Natural killer cell (primary cell): ENCODE measurements at regions of chr2 and their contacts with region 1.

Region 1: DNA sequence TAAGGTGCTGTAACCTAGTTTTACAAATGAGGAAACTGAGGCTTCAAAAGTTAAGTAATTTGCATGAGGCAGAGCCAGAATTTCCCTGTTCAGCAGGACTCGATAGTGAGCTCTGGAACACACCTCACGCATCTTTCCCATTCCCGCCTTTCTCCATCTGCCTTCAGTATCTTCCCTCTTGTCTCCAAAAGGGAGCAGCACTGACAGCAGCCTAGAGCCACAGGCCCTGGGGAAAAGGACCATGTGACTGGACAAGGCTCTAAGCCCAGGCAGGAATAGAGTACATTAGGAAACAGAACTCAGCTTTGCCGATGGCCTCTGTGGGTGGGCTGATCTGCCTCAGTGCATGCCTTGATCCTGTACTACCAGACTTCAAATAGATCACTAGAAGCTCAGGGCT is 21.5 kb downstream of the GPR155 start:
- DNase-seq: no peak
- ATAC-seq: no peak
- H3K4me3 ChIP-seq: no peak overlapping the region
- H3K4me3 Mint-ChIP-seq: no peak overlapping the region
- H3K27ac ChIP-seq: no peak overlapping the region
- H3K27ac Mint-ChIP-seq: no peak overlapping the region
- H3K4me1 ChIP-seq: no peaks in the 10 kb centered on the region
- H3K4me1 Mint-ChIP-seq: no peaks in the 10 kb centered on the region
- H3K27me3 ChIP-seq: no peaks in the 10 kb centered on the region
- H3K27me3 Mint-ChIP-seq: no peaks in the 10 kb centered on the region
- CTCF ChIP-seq: no peak

Region 2: GRCh38 chr2:174522553-174522952 is 57.2 kb after region 1 on chr2:
- intact Hi-C with region 1: loop called (anchors 1 kb)
- DNase-seq: peak in 1 of 2 donors; percentile 37
- ATAC-seq: no peak
- H3K4me3 ChIP-seq: no peak overlapping the region
- H3K4me3 Mint-ChIP-seq: no peak overlapping the region
- H3K27ac ChIP-seq: no peak overlapping the region
- H3K27ac Mint-ChIP-seq: no peak overlapping the region
- H3K4me1 ChIP-seq: no peaks in the 10 kb centered on the region
- H3K4me1 Mint-ChIP-seq: peaks cover 4 to 5% of the 10 kb centered on the region in 2 donors
- H3K27me3 ChIP-seq: no peaks in the 10 kb centered on the region
- H3K27me3 Mint-ChIP-seq: peaks cover 12 to 14% of the 10 kb centered on the region in 2 donors
- CTCF ChIP-seq: peak; percentile 59

Region 3: DNA sequence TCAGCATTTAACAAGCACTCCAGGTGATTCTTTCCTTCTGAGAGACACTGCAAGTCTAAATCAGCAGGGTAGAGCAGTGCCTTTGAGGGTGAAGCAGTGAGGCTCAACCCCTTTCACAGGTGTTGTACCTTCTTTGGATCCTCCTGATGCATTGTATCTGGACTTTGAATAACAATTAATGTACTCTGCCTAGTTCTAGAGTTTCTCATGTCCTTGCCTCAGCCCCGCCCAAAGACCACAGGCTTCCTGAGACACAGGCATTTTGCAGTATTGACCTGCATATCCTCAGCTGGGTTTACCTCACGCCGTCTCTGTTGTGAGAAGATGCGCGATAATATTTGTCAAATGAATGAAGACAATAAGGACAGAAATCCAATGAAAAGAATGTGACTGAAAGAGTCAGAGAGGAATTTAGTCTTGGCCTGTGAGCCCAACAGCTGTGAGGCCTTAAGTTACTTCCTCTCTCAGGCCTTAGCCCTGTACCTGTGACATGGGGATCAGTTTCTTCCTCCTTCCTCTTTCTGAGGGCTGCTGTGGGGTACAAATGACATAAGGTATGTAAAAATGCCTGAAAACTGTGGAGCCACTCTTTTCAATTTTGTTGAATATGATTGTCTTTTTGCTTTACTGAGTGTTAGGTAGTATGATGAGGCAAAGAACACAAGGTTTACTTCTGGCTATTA is 88.6 kb after region 1 on chr2:
- intact Hi-C with region 1: loop called (anchors 5 kb)
- DNase-seq: peak in 1 of 2 donors; percentile 58
- ATAC-seq: peak; percentile 55 to 81 (median 76)
- H3K4me3 ChIP-seq: no peak overlapping the region
- H3K4me3 Mint-ChIP-seq: peak overlapping the region; percentile 52
- H3K27ac ChIP-seq: peak overlapping the region; percentile 66
- H3K27ac Mint-ChIP-seq: peak overlapping the region; percentile 90 to 92
- H3K4me1 ChIP-seq: peaks cover 21% of the 10 kb centered on the region
- H3K4me1 Mint-ChIP-seq: peaks cover 27 to 32% of the 10 kb centered on the region in 2 donors
- H3K27me3 ChIP-seq: no peaks in the 10 kb centered on the region
- H3K27me3 Mint-ChIP-seq: no peaks in the 10 kb centered on the region
- CTCF ChIP-seq: no peak

Region 4: DNA sequence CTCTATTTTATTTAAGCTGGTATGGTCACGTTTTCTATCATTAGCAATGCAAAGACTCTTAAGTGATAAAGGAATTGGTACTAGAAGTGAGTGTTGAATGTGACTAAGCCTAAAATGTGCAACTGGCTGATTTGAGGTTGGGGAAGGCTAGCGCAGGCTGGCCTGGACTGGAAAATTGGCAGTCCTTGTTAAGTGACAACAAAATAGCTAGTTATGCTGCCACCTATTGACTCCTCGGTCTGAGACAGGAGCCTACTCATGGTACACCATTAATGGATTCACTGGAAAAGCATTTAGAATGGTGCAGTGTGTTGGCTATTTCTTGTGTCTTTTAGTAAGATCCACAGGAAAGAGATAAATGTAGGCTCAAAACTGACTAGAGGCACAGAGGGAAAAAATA is 138.0 kb after region 1 on chr2:
- intact Hi-C with region 1: loop called (anchors 1 kb)
- DNase-seq: peak; percentile 39 to 84
- ATAC-seq: peak; percentile 87 to 94 (median 93)
- H3K4me3 ChIP-seq: no peak overlapping the region
- H3K4me3 Mint-ChIP-seq: no peak overlapping the region
- H3K27ac ChIP-seq: peak overlapping the region; percentile 44
- H3K27ac Mint-ChIP-seq: peak overlapping the region; percentile 81 to 83
- H3K4me1 ChIP-seq: peaks cover 45% of the 10 kb centered on the region
- H3K4me1 Mint-ChIP-seq: peaks cover 64 to 69% of the 10 kb centered on the region in 2 donors
- H3K27me3 ChIP-seq: no peaks in the 10 kb centered on the region
- H3K27me3 Mint-ChIP-seq: no peaks in the 10 kb centered on the region
- CTCF ChIP-seq: peak; percentile 60

Region 5: GRCh38 chr2:174688079-174688478 is 222.8 kb after region 1 on chr2:
- intact Hi-C with region 1: loop called (anchors 1 kb)
- DNase-seq: peak in 1 of 2 donors; percentile 71
- ATAC-seq: peak; percentile 62 to 76 (median 67)
- H3K4me3 ChIP-seq: no peak overlapping the region
- H3K4me3 Mint-ChIP-seq: no peak overlapping the region
- H3K27ac ChIP-seq: no peak overlapping the region
- H3K27ac Mint-ChIP-seq: no peak overlapping the region
- H3K4me1 ChIP-seq: peaks cover 5% of the 10 kb centered on the region
- H3K4me1 Mint-ChIP-seq: peaks cover 6 to 16% of the 10 kb centered on the region in 2 donors
- H3K27me3 ChIP-seq: no peaks in the 10 kb centered on the region
- H3K27me3 Mint-ChIP-seq: peaks cover 5 to 19% of the 10 kb centered on the region in 2 donors
- CTCF ChIP-seq: peak; percentile 67